ENCODE measurements at regions of chr3 and their contacts with region 1.

Region 1: GRCh38 chr3:184290331-184290730 is 8.7 kb upstream of the PSMD2 start:
- DNase-seq: no peak
- H3K4me3 ChIP-seq: no peak overlapping the region
- H3K27ac ChIP-seq: no peak overlapping the region
- H3K4me1 ChIP-seq: no peaks in the 10 kb centered on the region
- H3K27me3 ChIP-seq: no peaks in the 10 kb centered on the region
- CTCF ChIP-seq: no peak
- POLR2A ChIP-seq: no peak

Region 2: GRCh38 chr3:184229394-184230080 is 60.8 kb before region 1 on chr3 and contains the start of gene VWA5B2:
- intact Hi-C with region 1: no loop called
- DNase-seq: peak in 1 of 2 donors; percentile 26
- H3K4me3 ChIP-seq: peak within 1 kb of the TSS; percentile 41 to 68 (median 54)
- H3K27ac ChIP-seq: no peak within 1 kb of the TSS
- H3K4me1 ChIP-seq: peaks cover 4 to 8% of the 10 kb centered on the region in 2 donors
- H3K27me3 ChIP-seq: peaks cover 10 to 37% of the 10 kb centered on the region in 2 donors
- CTCF ChIP-seq: peak in 1 of 3 donors; percentile 29
- POLR2A ChIP-seq: no peak
- total RNA-seq, gene VWA5B2: 0.16 to 0.88 (median 0.33) TPM

Region 3: GRCh38 chr3:185188816-185189215 is 898.5 kb after region 1 on chr3:
- intact Hi-C with region 1: loop called (anchors 5 kb)
- DNase-seq: no peak
- H3K4me3 ChIP-seq: no peak overlapping the region
- H3K27ac ChIP-seq: no peak overlapping the region
- H3K4me1 ChIP-seq: no peaks in the 10 kb centered on the region
- H3K27me3 ChIP-seq: no peaks in the 10 kb centered on the region
- CTCF ChIP-seq: no peak
- POLR2A ChIP-seq: no peak

Measured in breast epithelium (tissue), 4 donors.